ENCODE measurements at regions of chr7 and their contacts with region 1.

Region 1: DNA sequence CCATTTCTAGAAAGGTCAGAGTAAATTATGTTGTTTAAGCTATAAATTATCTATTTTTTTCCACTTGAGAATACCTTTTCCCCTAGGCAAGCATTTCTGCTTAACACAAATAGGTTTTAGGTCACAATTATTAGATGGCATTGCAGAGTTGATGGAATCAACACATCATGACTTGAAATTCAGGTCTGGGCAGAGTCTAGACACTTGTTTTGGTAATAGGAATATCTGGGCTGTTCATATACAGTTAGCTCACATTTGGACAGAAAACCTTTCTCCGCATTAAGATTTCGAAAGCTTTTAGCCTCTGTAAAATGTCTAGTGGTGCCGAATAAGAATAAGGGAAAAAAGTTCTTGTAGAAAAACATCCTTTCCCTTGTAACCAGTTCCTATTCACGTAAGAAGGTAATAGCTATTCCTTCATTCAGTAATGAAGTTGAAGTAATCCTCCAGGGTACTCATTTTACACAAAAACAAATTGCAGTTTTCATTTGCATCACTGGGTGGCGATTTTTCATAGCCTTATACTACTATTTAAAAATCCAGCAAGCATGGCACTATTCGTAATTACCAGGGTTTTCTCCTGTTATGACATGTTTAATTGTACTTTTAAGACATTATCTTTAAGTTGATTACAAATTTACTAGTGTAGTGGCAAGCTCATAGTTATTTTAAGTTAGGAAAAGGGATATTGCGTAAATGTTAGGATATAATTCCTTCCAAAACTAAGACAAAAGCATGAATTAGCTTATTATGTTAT is 37.0 kb downstream of the RPA3 start:
- DNase-seq: peak; percentile 56
- ATAC-seq: peak; percentile 97
- H3K4me3 ChIP-seq: no peak overlapping the region
- H3K27ac ChIP-seq: no peak overlapping the region
- H3K4me1 ChIP-seq: peaks cover 3% of the 10 kb centered on the region; the same call in 1 of the 2 replicates
- H3K27me3 ChIP-seq: no peaks in the 10 kb centered on the region
- CTCF ChIP-seq: peak; percentile 44 to 67 (median 52); a peak in 5 of 6 replicates
- EP300 ChIP-seq: no peak
- POLR2A ChIP-seq: no peak
- RAD21 ChIP-seq: peak; percentile 86

Region 2: DNA sequence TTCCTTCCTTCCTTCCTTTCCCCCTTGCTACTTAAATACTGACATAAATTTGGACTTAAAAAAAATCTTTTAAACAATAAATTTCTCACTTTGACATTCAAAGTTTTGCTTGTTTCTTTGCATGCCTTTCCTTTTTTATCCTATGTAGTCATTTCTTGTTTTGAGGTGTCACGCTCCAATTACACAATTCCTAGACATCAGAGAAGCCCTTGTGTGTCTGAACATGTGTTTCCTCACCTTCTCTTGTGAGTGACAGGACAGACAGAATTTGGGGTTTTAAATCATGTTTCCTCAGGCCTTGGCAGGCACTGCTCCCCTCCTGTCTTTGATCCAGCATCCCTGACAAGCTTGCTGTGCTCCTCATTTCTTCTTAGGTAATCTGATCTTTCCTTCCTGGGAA is 1500.2 kb before region 1 on chr7:
- CTCF ChIA-PET with region 1: no interaction called
- POLR2A ChIA-PET with region 1: no interaction called
- RAD21 ChIA-PET with region 1: no interaction called
- SMC1A ChIA-PET with region 1: no interaction called
- in situ Hi-C with region 1: no loop called
- intact Hi-C with region 1: no loop called
- DNase-seq: no peak
- ATAC-seq: no peak
- H3K4me3 ChIP-seq: no peak overlapping the region
- H3K27ac ChIP-seq: no peak overlapping the region
- H3K4me1 ChIP-seq: peaks cover 5% of the 10 kb centered on the region
- H3K27me3 ChIP-seq: no peaks in the 10 kb centered on the region
- CTCF ChIP-seq: no peak
- EP300 ChIP-seq: no peak
- POLR2A ChIP-seq: no peak
- RAD21 ChIP-seq: no peak

Region 3: DNA sequence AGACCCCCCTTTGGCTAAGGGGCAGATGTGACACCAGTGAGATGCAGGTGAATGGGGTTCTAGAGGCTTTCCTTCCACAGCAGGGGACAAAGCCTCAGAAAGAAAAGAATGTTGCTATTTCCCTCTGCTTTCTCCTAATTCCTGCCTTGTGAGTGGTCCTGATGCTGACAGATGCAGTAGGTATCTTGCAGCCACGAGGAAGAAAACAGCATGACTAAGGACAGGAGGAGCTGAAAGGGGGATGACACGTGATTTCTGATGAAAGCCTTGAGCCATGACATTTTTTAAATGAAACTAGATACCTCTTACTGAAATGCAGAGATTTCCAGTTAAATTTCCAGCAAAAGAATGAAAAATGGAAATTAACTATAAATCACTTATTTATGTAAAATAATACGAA is 406.6 kb before region 1 on chr7:
- CTCF ChIA-PET with region 1: no interaction called
- POLR2A ChIA-PET with region 1: no interaction called
- RAD21 ChIA-PET with region 1: no interaction called
- SMC1A ChIA-PET with region 1: no interaction called
- in situ Hi-C with region 1: no loop called
- intact Hi-C with region 1: no loop called
- DNase-seq: no peak
- ATAC-seq: no peak
- H3K4me3 ChIP-seq: no peak overlapping the region
- H3K27ac ChIP-seq: no peak overlapping the region
- H3K4me1 ChIP-seq: no peaks in the 10 kb centered on the region
- H3K27me3 ChIP-seq: no peaks in the 10 kb centered on the region
- CTCF ChIP-seq: no peak
- EP300 ChIP-seq: no peak
- POLR2A ChIP-seq: no peak
- RAD21 ChIP-seq: no peak

Region 4: DNA sequence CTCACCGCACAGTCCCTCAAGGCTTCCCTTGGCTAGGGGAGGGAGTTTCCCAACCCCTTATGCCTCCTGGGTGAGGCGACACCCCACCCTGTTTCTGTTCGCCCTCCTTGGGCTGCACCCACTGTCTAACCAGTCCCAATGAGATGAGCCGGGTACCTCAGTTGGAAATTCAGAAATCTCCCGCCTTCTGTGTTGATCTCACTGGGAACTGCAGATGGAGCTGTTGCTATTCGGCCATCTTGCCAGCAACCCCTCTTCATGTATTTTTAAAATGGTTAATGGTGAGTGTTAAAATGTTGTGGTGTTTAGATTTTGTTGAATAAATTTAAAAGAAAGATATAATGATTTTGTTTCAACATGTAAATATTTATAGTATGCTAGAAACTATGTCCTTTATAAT is 18.8 kb before region 1 on chr7:
- CTCF ChIA-PET with region 1: interaction called, 14 read pairs
- POLR2A ChIA-PET with region 1: no interaction called
- RAD21 ChIA-PET with region 1: interaction called, 6 read pairs
- SMC1A ChIA-PET with region 1: interaction called, 8 read pairs
- in situ Hi-C with region 1: no loop called
- intact Hi-C with region 1: no loop called
- DNase-seq: no peak
- ATAC-seq: no peak
- H3K4me3 ChIP-seq: no peak overlapping the region
- H3K27ac ChIP-seq: no peak overlapping the region
- H3K4me1 ChIP-seq: no peaks in the 10 kb centered on the region
- H3K27me3 ChIP-seq: no peaks in the 10 kb centered on the region
- CTCF ChIP-seq: peak; percentile 3 to 21 (median 18); a peak in 2 of 6 replicates
- EP300 ChIP-seq: no peak
- POLR2A ChIP-seq: no peak
- RAD21 ChIP-seq: peak; percentile 39

Region 5: DNA sequence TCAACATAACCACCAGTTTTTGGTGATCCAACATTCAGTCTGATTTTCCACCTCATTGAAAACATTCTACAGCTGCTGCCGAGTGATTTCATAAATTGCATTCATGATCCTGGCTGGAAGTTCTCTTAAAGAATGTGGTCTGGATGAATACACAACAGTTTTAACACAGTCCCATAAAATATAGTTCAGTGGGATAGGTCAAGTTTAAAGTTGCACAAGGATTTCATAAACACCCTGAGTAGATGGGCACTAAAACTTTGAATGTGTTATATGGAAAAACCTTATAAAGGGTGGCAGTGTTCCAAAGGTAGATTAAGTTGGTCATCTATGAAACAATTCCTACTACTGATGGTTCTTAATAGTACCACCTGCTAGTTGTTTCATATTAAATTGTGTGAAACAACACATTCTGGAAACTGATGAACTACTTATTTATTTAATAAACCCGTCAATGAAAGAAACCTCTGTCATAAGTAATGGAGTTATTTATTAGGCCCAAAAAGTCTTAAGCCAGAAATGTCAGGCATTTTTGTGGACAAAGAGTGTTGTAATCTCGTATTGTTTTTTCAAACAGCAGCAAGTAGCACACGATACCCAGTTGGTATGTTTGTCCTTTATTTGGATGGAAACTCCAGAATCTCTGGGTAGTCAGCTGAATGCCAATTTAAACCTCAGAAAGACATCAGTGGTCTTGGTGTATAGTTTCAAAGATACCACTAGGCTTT is 51.4 kb after region 1 on chr7:
- CTCF ChIA-PET with region 1: interaction called, 11 read pairs
- POLR2A ChIA-PET with region 1: no interaction called
- RAD21 ChIA-PET with region 1: interaction called, 39 read pairs
- SMC1A ChIA-PET with region 1: interaction called, 40 read pairs
- in situ Hi-C with region 1: no loop called
- intact Hi-C with region 1: no loop called
- DNase-seq: no peak
- ATAC-seq: no peak
- H3K4me3 ChIP-seq: no peak overlapping the region
- H3K27ac ChIP-seq: no peak overlapping the region
- H3K4me1 ChIP-seq: no peaks in the 10 kb centered on the region
- H3K27me3 ChIP-seq: no peaks in the 10 kb centered on the region
- CTCF ChIP-seq: no peak
- EP300 ChIP-seq: no peak
- POLR2A ChIP-seq: no peak
- RAD21 ChIP-seq: no peak

Region 6: GRCh38 chr7:7772397-7772821 is 91.1 kb after region 1 on chr7:
- CTCF ChIA-PET with region 1: interaction called, 22 read pairs
- POLR2A ChIA-PET with region 1: no interaction called
- RAD21 ChIA-PET with region 1: interaction called, 24 read pairs
- SMC1A ChIA-PET with region 1: interaction called, 11 read pairs
- in situ Hi-C with region 1: no loop called
- intact Hi-C with region 1: no loop called
- DNase-seq: no peak
- ATAC-seq: peak; percentile 77
- H3K4me3 ChIP-seq: 0 out of 2 replicates have a peak overlapping the region, but pooled peaks have one; percentile 6
- H3K27ac ChIP-seq: no peak overlapping the region
- H3K4me1 ChIP-seq: peaks cover 18% of the 10 kb centered on the region
- H3K27me3 ChIP-seq: no peaks in the 10 kb centered on the region
- CTCF ChIP-seq: no peak
- EP300 ChIP-seq: no peak
- POLR2A ChIP-seq: no peak
- RAD21 ChIP-seq: no peak

Region 7: DNA sequence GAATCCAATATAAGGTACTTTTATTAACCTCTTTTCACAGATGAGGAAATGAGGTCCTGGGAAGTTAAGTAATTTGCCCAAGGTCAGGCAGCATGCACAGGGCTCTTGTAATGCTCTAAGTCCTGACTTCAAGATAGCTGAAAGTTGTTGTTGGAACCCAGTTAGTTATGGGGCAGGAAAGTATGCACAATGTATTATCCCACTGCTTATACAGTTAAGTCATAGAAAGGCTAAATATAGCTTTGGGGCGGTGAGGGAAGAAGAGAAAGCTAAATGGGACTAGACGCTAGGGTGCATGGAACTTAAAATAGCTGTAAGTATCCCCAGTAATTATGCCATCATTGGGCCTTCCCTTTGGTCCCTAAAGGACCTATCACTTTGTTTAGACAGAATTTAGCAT is 296.4 kb after region 1 on chr7:
- CTCF ChIA-PET with region 1: interaction called, 27 read pairs
- POLR2A ChIA-PET with region 1: no interaction called
- RAD21 ChIA-PET with region 1: interaction called, 24 read pairs
- SMC1A ChIA-PET with region 1: interaction called, 16 read pairs
- in situ Hi-C with region 1: no loop called
- intact Hi-C with region 1: no loop called
- DNase-seq: no peak
- ATAC-seq: peak; percentile 4
- H3K4me3 ChIP-seq: peak overlapping the region; percentile 47; the same call in 1 of the 2 replicates
- H3K27ac ChIP-seq: peak overlapping the region; percentile 30; the same call in 1 of the 2 replicates
- H3K4me1 ChIP-seq: peaks cover 4% of the 10 kb centered on the region; the same call in 1 of the 2 replicates
- H3K27me3 ChIP-seq: no peaks in the 10 kb centered on the region
- CTCF ChIP-seq: no peak
- EP300 ChIP-seq: no peak
- POLR2A ChIP-seq: no peak
- RAD21 ChIP-seq: no peak

Region 8: DNA sequence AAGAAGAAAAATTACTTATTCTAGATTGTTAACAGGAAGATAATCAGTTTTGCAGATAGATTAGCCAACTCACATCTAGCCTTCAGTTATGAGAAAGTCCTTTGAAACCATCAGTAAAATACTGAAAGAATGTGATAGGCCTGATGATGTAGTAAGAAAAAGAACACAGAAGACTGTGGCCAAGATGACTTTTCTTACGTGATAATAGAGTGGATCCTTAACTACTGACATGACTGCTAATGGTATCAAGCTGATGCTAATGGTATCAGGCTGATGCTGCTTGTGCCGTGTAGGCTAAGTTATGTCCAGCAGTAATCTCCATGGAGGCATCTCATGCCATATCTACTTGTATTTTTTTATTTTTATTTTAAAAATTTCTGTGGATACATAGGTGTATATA is 401.4 kb after region 1 on chr7:
- CTCF ChIA-PET with region 1: no interaction called
- POLR2A ChIA-PET with region 1: no interaction called
- RAD21 ChIA-PET with region 1: no interaction called
- SMC1A ChIA-PET with region 1: no interaction called
- in situ Hi-C with region 1: no loop called
- intact Hi-C with region 1: no loop called
- DNase-seq: no peak
- ATAC-seq: no peak
- H3K4me3 ChIP-seq: no peak overlapping the region
- H3K27ac ChIP-seq: no peak overlapping the region
- H3K4me1 ChIP-seq: no peaks in the 10 kb centered on the region
- H3K27me3 ChIP-seq: no peaks in the 10 kb centered on the region
- CTCF ChIP-seq: no peak
- EP300 ChIP-seq: no peak
- POLR2A ChIP-seq: no peak
- RAD21 ChIP-seq: no peak

Region 9: DNA sequence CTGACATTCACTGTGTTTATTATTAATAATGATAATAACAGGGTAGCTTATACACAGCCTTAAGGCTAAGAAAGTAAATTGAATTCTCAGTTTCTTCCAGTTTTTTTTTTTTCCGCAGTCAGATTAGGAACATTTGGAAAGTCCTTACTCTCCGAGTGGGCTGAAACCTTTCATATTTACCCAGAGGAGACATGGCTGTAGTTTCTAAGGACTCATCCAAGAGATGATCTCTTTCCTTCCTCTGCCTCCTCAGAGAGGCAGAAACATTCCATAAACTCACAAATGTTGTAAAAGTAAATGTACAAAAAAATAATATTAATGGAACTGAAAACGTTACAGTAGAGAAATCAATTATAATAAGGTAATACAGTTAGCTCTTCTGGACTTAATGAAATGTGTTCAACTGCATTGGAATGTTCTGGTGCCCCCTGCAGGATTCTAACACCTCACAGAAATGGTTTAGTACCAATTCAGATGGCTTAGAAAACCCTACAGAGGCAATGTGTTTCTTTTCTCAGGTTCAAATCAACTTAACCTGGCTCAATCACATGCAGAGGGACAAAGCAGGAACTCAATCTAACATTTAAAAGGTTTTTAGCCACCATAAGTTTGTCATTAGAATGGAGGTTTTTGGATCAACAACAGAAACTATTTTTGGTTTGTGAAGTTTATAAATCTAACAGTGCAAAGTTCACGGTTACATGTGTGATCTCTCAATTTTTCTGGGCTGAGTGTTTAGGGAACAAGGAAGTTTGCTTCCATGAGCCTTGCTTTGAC is 508.9 kb after region 1 on chr7:
- CTCF ChIA-PET with region 1: interaction called, 46 read pairs
- POLR2A ChIA-PET with region 1: interaction called, 4 read pairs
- RAD21 ChIA-PET with region 1: interaction called, 43 read pairs
- SMC1A ChIA-PET with region 1: interaction called, 37 read pairs
- in situ Hi-C with region 1: no loop called
- intact Hi-C with region 1: loop called (anchors 5 kb)
- DNase-seq: peak; percentile 77
- ATAC-seq: peak; percentile 97
- H3K4me3 ChIP-seq: no peak overlapping the region
- H3K27ac ChIP-seq: peak overlapping the region; percentile 44; the same call in 1 of the 2 replicates
- H3K4me1 ChIP-seq: no peaks in the 10 kb centered on the region
- H3K27me3 ChIP-seq: no peaks in the 10 kb centered on the region
- CTCF ChIP-seq: peak; percentile 66 to 82 (median 81); a peak in 5 of 6 replicates
- EP300 ChIP-seq: no peak
- POLR2A ChIP-seq: no peak
- RAD21 ChIP-seq: peak; percentile 97